Left colon (tissue), 2 donors: ENCODE measurements at regions of chr1 and their contacts with region 1.

Region 1: GRCh38 chr1:61049850-61050540 is 32.4 kb upstream of the NFIA start:
- DNase-seq: peak; percentile 89 to 96
- ATAC-seq: peak; percentile 71

Region 2: DNA sequence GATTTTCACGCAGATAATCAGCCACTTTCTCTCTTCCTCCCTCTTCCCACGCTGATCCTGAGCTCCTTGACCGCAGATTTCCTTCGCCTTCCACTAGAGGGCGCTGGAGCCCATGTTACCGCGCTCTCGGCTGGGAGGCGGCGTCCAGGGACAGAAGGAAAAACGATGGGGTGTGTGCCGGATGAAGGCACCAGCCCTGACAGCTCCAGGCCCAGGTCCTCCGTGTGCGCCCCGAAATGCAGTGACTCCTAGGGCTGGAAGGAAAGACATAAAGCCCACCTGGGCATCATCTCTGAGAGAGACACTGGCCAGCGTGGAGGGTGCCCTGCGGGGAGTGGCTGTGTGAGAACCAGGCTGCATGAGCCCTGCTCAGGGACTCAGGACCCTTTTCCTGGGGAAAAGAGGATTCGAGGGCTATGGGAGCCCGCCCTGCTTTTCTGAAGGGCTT is 1078.5 kb before region 1 on chr1:
- intact Hi-C with region 1: loop called in 1 of 2 experiments (anchors 10 kb)
- DNase-seq: peak; percentile 62 to 77
- ATAC-seq: peak; percentile 86

Region 3: GRCh38 chr1:60950224-60951063 is 99.6 kb before region 1 on chr1:
- intact Hi-C with region 1: no loop called
- DNase-seq: no peak
- ATAC-seq: no peak

Region 4: GRCh38 chr1:61238371-61238689 is 188.3 kb after region 1 on chr1:
- intact Hi-C with region 1: loop called in 1 of 2 experiments (anchors 10 kb)
- DNase-seq: no peak
- ATAC-seq: no peak

Region 5: DNA sequence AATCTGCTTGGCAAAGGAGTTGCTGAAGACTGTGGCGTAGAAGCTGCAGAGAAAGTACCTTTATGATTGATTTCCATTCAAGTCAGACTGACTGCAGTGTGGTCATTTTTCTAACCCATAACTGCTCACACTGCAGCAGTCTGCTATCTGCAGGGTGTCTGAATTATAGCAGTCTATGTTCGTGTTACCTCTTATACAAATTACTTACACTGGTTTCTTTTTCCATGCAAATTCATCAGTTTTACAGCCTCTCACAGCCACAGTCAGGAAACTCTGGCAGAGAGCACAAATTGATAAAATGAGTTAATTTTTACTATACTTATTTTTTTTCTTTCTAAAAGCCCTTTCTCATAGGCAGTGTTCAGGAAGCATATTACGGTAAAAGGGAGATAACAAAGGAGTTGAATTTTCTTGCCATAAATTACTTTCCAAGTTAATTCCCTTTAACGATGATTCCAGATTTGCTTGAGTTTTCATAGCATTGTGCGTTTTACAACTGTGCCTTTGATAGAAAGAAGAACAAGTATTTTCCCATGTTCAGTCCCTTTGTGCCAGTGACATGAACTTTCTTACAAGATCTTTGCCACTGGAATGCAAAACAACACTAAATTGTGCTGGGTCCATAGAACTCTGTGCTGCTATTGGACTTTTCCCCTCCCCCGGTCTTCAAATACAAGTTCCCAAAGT is 293.9 kb after region 1 on chr1:
- intact Hi-C with region 1: loop called in 1 of 2 experiments (anchors 5 kb)
- DNase-seq: no peak
- ATAC-seq: no peak

Region 6: GRCh38 chr1:61453111-61453961 is 403.3 kb after region 1 on chr1:
- intact Hi-C with region 1: loop called (anchors 10 kb)
- DNase-seq: peak; percentile 83 to 86
- ATAC-seq: peak; percentile 54